CD4-positive, alpha-beta memory T cell (primary cell): ENCODE measurements at regions of chr3 and their contacts with region 1.

Region 1: DNA sequence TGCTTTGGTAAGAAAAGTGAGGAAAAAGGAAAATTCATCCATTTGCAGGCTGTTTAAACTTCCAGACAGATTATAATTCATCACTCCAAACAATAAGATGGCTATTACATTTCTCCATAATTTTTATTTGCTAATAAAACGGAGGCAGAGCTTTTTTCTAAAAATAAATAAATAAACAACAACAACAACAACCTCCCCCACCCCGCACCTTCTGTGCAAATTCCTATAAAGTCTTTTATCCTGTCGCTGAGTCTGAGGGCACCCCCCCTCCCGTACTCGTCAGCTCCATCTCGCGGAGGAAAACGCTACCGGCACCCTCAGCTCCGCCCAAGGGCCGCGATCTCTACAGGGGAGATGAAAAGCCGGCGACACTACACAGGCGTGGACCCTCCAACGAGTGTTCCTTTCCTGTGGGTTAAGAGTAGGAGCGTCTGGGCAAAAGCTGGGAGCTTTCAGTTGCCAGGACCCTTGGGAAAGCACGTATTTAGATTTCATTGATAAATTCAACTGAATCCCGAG is 1.0 kb upstream of the ATP1B3 start:
- DNase-seq: peak; percentile 75 to 84 (median 78)
- H3K4me3 ChIP-seq: peak overlapping the region; percentile 82 to 86
- H3K4me3 Mint-ChIP-seq: peak overlapping the region; percentile 85 to 96 (median 92)
- H3K27ac ChIP-seq: peak overlapping the region; percentile 95
- H3K27ac Mint-ChIP-seq: peak overlapping the region; percentile 93 to 99 (median 95)
- H3K4me1 ChIP-seq: peaks cover 28% of the 10 kb centered on the region
- H3K4me1 Mint-ChIP-seq: peaks cover 19 to 39% (median 30%) of the 10 kb centered on the region in 4 donors
- H3K27me3 ChIP-seq: no peaks in the 10 kb centered on the region
- H3K27me3 Mint-ChIP-seq: peaks cover 0 to 1% of the 10 kb centered on the region in 2 donors

Region 2: GRCh38 chr3:141796081-141796888 is 79.1 kb before region 1 on chr3:
- CTCF ChIA-PET with region 1: interaction called, 55 read pairs
- POLR2A ChIA-PET with region 1: interaction called, 87 read pairs
- intact Hi-C with region 1: loop called (anchors 1 kb)
- DNase-seq: peak; percentile 61 to 85 (median 66)
- H3K4me3 ChIP-seq: peak overlapping the region; percentile 61 to 76
- H3K4me3 Mint-ChIP-seq: peak overlapping the region; percentile 90 to 96 (median 92)
- H3K27ac ChIP-seq: peak overlapping the region; percentile 65
- H3K27ac Mint-ChIP-seq: peak overlapping the region; percentile 97 to 99 (median 98)
- H3K4me1 ChIP-seq: peaks cover 52% of the 10 kb centered on the region
- H3K4me1 Mint-ChIP-seq: peaks cover 46 to 60% (median 55%) of the 10 kb centered on the region in 4 donors
- H3K27me3 ChIP-seq: no peaks in the 10 kb centered on the region
- H3K27me3 Mint-ChIP-seq: no peaks in the 10 kb centered on the region

Region 3: GRCh38 chr3:141887051-141887450 is 11.6 kb after region 1 on chr3:
- CTCF ChIA-PET with region 1: interaction called, 10 read pairs
- POLR2A ChIA-PET with region 1: interaction called, 16 read pairs
- intact Hi-C with region 1: no loop called
- DNase-seq: no peak
- H3K4me3 ChIP-seq: no peak overlapping the region
- H3K4me3 Mint-ChIP-seq: no peak overlapping the region
- H3K27ac ChIP-seq: no peak overlapping the region
- H3K27ac Mint-ChIP-seq: no peak overlapping the region
- H3K4me1 ChIP-seq: peaks cover 3% of the 10 kb centered on the region
- H3K4me1 Mint-ChIP-seq: peaks cover 17 to 29% (median 22%) of the 10 kb centered on the region in 4 donors
- H3K27me3 ChIP-seq: no peaks in the 10 kb centered on the region
- H3K27me3 Mint-ChIP-seq: no peaks in the 10 kb centered on the region

Region 4: DNA sequence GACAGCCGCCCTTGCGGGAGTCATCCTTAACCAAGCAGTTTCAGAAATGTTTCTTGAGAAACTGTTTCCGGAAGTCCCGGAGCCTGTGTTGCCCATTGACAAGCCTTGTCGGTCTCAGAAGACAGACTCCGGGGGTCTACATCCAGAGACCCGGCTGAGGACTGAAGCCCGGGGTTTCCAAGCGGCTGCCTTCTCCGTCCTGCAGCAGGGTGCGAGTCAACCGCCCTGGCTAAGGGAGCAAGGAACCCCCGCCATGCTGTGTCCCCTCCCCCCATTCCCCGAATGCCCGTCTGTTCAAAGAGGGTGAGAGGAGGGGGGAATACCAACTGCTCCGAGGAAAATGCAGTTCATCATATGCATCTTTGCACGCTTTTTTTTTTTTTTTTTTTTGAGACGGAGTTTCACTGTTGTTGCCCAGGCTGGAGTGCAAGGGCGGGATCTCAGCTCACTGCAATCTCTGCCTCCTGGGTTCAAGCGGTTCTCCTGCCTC is 62.6 kb after region 1 on chr3:
- CTCF ChIA-PET with region 1: no interaction called
- POLR2A ChIA-PET with region 1: no interaction called
- intact Hi-C with region 1: no loop called
- DNase-seq: no peak
- H3K4me3 ChIP-seq: no peak overlapping the region
- H3K4me3 Mint-ChIP-seq: no peak overlapping the region
- H3K27ac ChIP-seq: no peak overlapping the region
- H3K27ac Mint-ChIP-seq: no peak overlapping the region
- H3K4me1 ChIP-seq: no peaks in the 10 kb centered on the region
- H3K4me1 Mint-ChIP-seq: no peaks in the 10 kb centered on the region
- H3K27me3 ChIP-seq: no peaks in the 10 kb centered on the region
- H3K27me3 Mint-ChIP-seq: no peaks in the 10 kb centered on the region

Region 5: GRCh38 chr3:142028243-142028777 is 152.9 kb after region 1 on chr3:
- CTCF ChIA-PET with region 1: no interaction called
- POLR2A ChIA-PET with region 1: no interaction called
- intact Hi-C with region 1: no loop called
- DNase-seq: peak; percentile 24 to 51 (median 35)
- H3K4me3 ChIP-seq: peak overlapping the region in 1 of 2 donors; percentile 2
- H3K4me3 Mint-ChIP-seq: peak overlapping the region; percentile 75 to 95 (median 84)
- H3K27ac ChIP-seq: no peak overlapping the region
- H3K27ac Mint-ChIP-seq: peak overlapping the region in 4 of 7 donors; percentile 56 to 80 (median 62)
- H3K4me1 ChIP-seq: peaks cover 6% of the 10 kb centered on the region
- H3K4me1 Mint-ChIP-seq: peaks cover 14 to 25% (median 17%) of the 10 kb centered on the region in 4 donors
- H3K27me3 ChIP-seq: no peaks in the 10 kb centered on the region
- H3K27me3 Mint-ChIP-seq: no peaks in the 10 kb centered on the region

Region 6: DNA sequence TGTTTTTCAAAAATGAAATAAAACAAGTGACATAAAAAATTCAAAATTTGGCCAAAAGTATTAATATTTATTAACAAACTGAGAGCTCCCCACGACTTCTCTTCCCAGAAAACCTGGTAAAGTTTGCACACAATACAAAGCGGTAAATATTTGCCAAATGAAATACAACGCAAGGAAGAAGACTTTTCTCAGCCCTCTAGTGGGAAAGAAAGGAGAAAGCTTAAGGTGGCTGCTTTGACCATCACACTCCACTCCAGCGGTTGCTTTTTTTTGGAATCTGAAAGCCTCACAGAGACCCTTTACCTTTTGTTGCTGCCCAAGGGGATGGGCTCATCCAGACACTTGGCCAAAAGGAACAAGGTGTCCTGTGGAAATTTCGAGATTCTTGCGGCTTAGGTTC is 351.1 kb after region 1 on chr3:
- CTCF ChIA-PET with region 1: no interaction called
- POLR2A ChIA-PET with region 1: no interaction called
- intact Hi-C with region 1: loop called (anchors 1 kb)
- DNase-seq: no peak
- H3K4me3 ChIP-seq: no peak overlapping the region
- H3K4me3 Mint-ChIP-seq: peak overlapping the region; percentile 34 to 93 (median 62)
- H3K27ac ChIP-seq: no peak overlapping the region
- H3K27ac Mint-ChIP-seq: peak overlapping the region in 1 of 7 donors; percentile 81
- H3K4me1 ChIP-seq: peaks cover 12% of the 10 kb centered on the region
- H3K4me1 Mint-ChIP-seq: peaks cover 8 to 18% (median 12%) of the 10 kb centered on the region in 4 donors
- H3K27me3 ChIP-seq: no peaks in the 10 kb centered on the region
- H3K27me3 Mint-ChIP-seq: no peaks in the 10 kb centered on the region